Activated B cell treated with CpG ODN at 0.5 μM for 24 hours (primary cell): ENCODE measurements at regions of chr10 and their contacts with region 1.

Region 1: DNA sequence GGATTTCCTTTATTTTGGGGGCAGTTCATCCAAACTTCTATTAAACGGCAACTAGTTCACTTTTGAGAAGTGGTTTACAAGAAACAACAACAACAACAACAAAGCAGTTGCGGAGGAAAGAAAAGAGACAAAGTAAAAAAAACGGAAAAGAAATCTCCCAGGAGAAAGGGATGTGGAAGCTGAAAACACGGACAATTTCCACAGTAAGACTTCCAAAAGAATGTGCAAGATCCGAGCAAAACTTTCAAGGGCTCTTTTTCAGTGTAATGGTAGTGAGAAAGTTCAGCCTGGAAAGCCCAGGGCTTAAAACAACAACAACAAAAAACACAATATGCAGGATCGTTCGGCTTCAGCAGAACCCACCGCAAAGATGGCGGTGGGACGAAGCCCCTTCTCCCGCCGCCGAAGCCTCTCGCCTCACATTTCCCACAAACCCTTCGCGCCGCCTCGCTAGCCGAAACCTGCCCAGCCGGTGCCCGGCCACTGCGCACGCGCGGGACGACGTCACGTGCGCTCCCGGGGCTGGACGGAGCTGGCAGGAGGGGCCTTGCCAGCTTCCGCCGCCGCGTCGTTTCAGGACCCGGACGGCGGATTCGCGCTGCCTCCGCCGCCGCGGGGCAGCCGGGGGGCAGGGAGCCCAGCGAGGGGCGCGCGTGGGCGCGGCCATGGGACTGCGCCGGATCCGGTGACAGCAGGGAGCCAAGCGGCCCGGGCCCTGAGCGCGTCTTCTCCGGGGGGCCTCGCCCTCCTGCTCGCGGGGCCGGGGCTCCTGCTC is at the start of gene TNKS2:
- DNase-seq: peak; percentile 96
- ATAC-seq: peak; percentile 70
- H3K4me3 Mint-ChIP-seq: peak within 1 kb of the TSS; percentile 93
- H3K27ac Mint-ChIP-seq: peak within 1 kb of the TSS; percentile 97
- H3K4me1 Mint-ChIP-seq: peaks cover 66% of the 10 kb centered on the region
- H3K27me3 Mint-ChIP-seq: no peaks in the 10 kb centered on the region
- CTCF ChIP-seq: no peak
- total RNA-seq, gene TNKS2: 29.5 and 33.1 TPM in 2 replicates

Region 2: DNA sequence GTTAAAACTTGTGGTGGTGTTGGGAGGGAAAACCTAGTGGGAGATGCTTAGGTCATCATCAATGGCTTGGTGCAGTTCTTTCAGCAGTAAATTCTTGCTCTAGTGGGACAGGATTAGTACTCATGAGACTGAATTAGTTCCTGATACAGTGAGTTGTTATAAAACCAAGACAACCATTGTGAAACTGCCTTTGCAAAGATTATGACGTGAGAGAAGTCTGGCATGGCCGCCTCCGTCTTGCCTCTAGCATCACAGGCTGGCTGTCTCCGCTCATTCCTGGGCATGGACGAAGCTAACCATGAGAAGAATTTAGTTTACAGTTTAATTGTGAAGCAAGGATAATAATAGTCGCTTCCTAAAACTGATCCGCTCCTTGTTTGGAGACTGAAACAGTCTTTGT is 1910.2 kb before region 1 on chr10:
- CTCF ChIA-PET with region 1: no interaction called
- POLR2A ChIA-PET with region 1: no interaction called
- intact Hi-C with region 1: loop called (anchors 5 kb)
- DNase-seq: peak; percentile 32
- ATAC-seq: peak; percentile 75
- H3K4me3 Mint-ChIP-seq: peak overlapping the region; percentile 81
- H3K27ac Mint-ChIP-seq: peak overlapping the region; percentile 98
- H3K4me1 Mint-ChIP-seq: peaks cover 54% of the 10 kb centered on the region
- H3K27me3 Mint-ChIP-seq: peaks cover 3% of the 10 kb centered on the region
- CTCF ChIP-seq: no peak

Region 3: GRCh38 chr10:91220194-91220953 is 577.7 kb before region 1 on chr10 and contains the start of gene PCGF5:
- CTCF ChIA-PET with region 1: no interaction called
- POLR2A ChIA-PET with region 1: no interaction called
- intact Hi-C with region 1: loop called (anchors 10 kb)
- DNase-seq: peak; percentile 97
- ATAC-seq: peak; percentile 96
- H3K4me3 Mint-ChIP-seq: peak within 1 kb of the TSS; percentile 93
- H3K27ac Mint-ChIP-seq: peak within 1 kb of the TSS; percentile 91
- H3K4me1 Mint-ChIP-seq: peaks cover 68% of the 10 kb centered on the region
- H3K27me3 Mint-ChIP-seq: no peaks in the 10 kb centered on the region
- CTCF ChIP-seq: no peak
- total RNA-seq, gene PCGF5: 70.2 and 72.9 TPM in 2 replicates

Region 4: DNA sequence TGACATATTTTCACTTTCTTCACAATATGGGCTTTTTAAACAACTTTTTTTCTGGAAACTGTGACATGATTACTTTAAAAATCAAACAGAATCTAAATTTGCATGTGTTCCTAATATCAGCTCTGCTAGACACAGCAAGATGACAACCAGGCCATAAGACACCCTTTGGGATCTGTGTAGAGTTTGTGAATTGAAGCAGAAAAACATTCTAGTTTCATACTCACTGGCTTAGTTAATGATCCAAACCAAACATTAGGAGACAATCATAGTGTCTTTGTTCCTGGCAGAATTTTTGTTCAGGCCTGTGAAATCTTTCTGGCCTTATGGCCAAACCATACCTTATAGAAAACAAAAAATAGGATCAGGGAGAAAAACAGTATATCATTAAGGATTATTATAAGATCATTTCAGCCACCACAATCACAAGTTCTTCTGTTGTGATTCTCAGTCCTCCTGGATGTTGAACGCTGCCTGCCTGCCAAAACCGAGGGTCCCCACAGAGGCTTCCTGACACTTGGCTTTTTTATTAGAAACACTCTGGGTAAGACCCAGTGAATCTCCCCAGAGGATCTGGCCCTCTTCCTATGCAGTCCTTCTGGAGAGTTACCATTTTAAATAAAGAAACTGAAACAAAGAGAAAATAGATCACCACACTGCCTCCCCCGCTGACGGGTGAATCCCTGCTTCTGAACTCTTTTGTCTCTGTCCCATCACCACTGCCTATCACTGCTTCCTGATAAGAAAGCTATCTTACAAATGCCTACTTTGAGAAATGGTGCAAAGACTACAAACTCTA is 86.0 kb before region 1 on chr10:
- CTCF ChIA-PET with region 1: no interaction called
- POLR2A ChIA-PET with region 1: no interaction called
- intact Hi-C with region 1: no loop called
- DNase-seq: no peak
- ATAC-seq: no peak
- H3K4me3 Mint-ChIP-seq: no peak overlapping the region
- H3K27ac Mint-ChIP-seq: no peak overlapping the region
- H3K4me1 Mint-ChIP-seq: no peaks in the 10 kb centered on the region
- H3K27me3 Mint-ChIP-seq: peaks cover 12% of the 10 kb centered on the region
- CTCF ChIP-seq: no peak

Region 5: DNA sequence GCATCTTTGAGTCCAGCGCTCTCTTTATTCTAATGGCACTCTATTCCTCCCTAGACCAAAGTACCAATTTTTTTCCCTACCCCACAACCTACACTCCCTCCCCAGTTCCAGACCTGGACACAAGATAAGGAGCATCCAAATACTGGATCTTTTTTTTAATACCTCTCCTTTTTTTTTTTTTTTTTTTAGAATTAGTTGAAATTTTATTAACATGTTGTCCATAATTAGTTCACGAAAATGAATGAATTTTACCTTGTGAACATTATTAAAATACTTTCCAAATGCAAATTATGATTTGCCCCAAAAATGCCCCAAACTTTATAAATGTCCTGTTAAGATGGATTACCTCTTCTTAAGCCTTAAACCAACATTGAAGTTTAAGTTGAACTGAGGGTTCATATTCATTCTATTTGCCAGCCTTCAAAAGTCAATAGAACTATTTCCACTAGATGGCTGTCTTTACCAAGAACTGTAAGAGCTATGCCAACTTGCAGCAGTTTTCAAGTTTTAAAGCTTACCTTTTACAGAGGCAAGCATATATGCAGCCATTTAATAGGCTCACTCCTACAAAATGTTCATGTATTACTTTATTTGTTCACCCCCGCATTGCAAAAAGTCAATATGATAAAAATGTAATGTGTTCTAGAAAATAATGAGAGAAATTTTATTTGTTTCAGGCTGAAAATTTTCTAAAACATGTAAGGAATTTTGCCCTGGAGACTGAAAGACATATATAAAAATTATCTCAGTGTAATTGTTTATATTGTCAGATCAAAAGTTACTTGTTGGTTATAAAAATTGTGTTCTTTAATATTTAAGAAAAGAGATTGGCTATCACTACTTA is 39.5 kb before region 1 on chr10:
- CTCF ChIA-PET with region 1: interaction called, 3 read pairs
- POLR2A ChIA-PET with region 1: no interaction called
- intact Hi-C with region 1: loop called (anchors 2 kb)
- DNase-seq: no peak
- ATAC-seq: peak; percentile 28
- H3K4me3 Mint-ChIP-seq: no peak overlapping the region
- H3K27ac Mint-ChIP-seq: no peak overlapping the region
- H3K4me1 Mint-ChIP-seq: no peaks in the 10 kb centered on the region
- H3K27me3 Mint-ChIP-seq: peaks cover 15% of the 10 kb centered on the region
- CTCF ChIP-seq: no peak

Region 6: DNA sequence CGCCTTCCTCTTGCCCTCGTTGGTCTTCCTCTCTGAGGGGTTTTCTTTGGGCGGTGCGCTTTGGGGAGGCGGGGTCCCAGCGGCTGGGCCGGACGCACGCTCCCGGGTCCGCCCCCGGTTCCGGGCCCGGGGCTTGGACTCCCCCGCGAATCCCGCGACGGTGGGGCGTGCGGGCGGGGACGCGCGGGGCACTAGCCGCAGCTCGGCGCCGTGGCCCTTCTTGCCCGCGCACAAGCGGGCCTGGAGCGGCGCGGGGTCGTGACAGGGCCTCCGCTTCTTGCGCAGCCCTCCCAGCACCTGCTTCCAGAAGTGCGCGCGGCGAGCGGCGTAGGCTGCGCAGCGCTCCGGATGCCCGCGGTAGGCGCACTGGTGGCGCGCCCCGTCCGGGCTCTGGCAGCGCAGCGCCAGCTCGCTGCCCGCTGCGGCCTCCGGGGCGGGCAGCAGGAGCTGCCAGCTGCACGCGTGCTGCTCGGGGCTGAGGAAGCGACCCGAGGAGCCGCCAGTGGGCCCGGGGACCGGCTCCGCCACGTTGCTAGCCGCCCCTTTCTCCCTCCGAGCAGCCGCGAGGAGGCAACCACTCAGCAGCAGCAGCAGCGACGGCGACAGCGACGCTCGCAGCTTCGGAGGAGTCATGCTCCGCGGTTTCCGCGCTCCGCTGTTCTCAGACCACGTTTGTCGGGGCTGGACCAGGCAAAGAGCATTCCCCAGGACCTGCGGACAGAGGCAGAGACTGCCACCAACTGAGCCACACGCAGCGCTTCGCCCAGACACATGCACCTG is 110.5 kb after region 1 on chr10:
- CTCF ChIA-PET with region 1: interaction called, 9 read pairs
- POLR2A ChIA-PET with region 1: interaction called, 11 read pairs
- intact Hi-C with region 1: loop called (anchors 2 kb)
- DNase-seq: peak; percentile 74
- ATAC-seq: peak; percentile 84
- H3K4me3 Mint-ChIP-seq: peak overlapping the region; percentile 92
- H3K27ac Mint-ChIP-seq: peak overlapping the region; percentile 86
- H3K4me1 Mint-ChIP-seq: peaks cover 19% of the 10 kb centered on the region
- H3K27me3 Mint-ChIP-seq: peaks cover 3% of the 10 kb centered on the region
- CTCF ChIP-seq: no peak

Region 7: GRCh38 chr10:92142949-92143348 is 344.9 kb after region 1 on chr10:
- CTCF ChIA-PET with region 1: no interaction called
- POLR2A ChIA-PET with region 1: no interaction called
- intact Hi-C with region 1: loop called (anchors 2 kb)
- DNase-seq: no peak
- ATAC-seq: peak; percentile 25
- H3K4me3 Mint-ChIP-seq: peak overlapping the region; percentile 73
- H3K27ac Mint-ChIP-seq: peak overlapping the region; percentile 83
- H3K4me1 Mint-ChIP-seq: peaks cover 61% of the 10 kb centered on the region
- H3K27me3 Mint-ChIP-seq: no peaks in the 10 kb centered on the region
- CTCF ChIP-seq: no peak

Region 8: GRCh38 chr10:92573798-92574547 is 775.9 kb after region 1 on chr10 and contains the start of gene IDE:
- CTCF ChIA-PET with region 1: no interaction called
- POLR2A ChIA-PET with region 1: no interaction called
- intact Hi-C with region 1: loop called (anchors 5 kb)
- DNase-seq: peak; percentile 84
- ATAC-seq: peak; percentile 76
- H3K4me3 Mint-ChIP-seq: peak within 1 kb of the TSS; percentile 88
- H3K27ac Mint-ChIP-seq: peak within 1 kb of the TSS; percentile 85
- H3K4me1 Mint-ChIP-seq: peaks cover 40% of the 10 kb centered on the region
- H3K27me3 Mint-ChIP-seq: no peaks in the 10 kb centered on the region
- CTCF ChIP-seq: no peak
- total RNA-seq, gene IDE: 37.7 and 39.2 TPM in 2 replicates